GM12878 (cell line): ENCODE measurements at regions of chr1 and their contacts with region 1.

Region 1: DNA sequence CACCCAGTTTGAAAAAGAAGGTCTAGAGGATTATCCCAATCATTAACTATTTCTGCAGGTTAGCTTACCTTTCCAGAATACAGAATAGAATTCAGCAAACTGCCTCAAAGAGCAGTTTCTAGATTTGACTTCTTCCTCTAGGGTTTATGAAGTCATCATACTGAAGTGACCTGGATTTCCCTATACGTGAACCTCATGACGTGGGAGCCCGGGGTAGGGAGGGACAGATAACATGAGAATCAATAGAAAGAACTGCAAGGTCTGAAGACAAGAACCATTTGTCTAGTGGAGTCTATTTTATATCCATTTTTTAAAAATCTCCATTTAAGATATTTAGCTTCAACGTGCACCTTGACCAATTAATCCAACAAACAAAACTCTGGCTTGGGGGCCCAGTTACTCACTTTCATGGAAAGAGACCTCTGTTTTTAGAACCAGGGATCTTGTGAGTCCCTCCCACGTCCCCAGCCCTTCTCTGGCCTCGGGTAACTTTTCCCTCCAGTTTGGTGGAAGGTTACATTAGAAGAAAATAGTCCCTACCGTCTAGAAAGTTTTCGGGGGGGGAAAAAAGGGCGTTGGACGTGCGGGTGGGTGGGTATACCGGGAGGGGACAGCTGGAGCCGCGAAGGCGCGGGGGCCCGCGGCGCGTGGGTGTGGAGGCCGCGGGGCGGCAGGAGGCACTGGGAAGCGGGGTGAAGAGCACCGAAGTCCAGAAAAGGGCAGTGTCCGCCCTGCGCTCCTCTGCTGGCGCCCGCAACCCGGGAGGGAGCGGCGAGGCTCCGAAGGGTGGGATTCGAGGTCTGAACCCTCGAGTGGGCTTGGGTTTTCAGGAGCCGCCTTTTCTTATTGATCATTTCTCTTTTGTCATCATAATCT is 13.8 kb upstream of the POGZ start:
- DNase-seq: no peak
- ATAC-seq: peak; percentile 49
- H3K4me3 ChIP-seq: peak overlapping the region; percentile 65
- H3K27ac ChIP-seq: peak overlapping the region; percentile 37
- H3K4me1 ChIP-seq: peaks cover 18% of the 10 kb centered on the region
- H3K27me3 ChIP-seq: no peaks in the 10 kb centered on the region
- CTCF ChIP-seq: no peak
- EP300 ChIP-seq: no peak
- POLR2A ChIP-seq: peak; percentile 47
- RAD21 ChIP-seq: 0 out of 2 replicates have a peak, but pooled peaks have one; percentile 5

Region 2: GRCh38 chr1:151254217-151255213 is 218.6 kb before region 1 on chr1 and contains the start of gene PSMD4:
- CTCF ChIA-PET with region 1: no interaction called
- POLR2A ChIA-PET with region 1: no interaction called
- RAD21 ChIA-PET with region 1: no interaction called
- SMC1A ChIA-PET with region 1: no interaction called
- in situ Hi-C with region 1: no loop called
- intact Hi-C with region 1: no loop called
- DNase-seq: peak; percentile 96
- ATAC-seq: peak; percentile 95
- H3K4me3 ChIP-seq: peak within 1 kb of the TSS; percentile 81
- H3K27ac ChIP-seq: peak within 1 kb of the TSS; percentile 87
- H3K4me1 ChIP-seq: peaks cover 2% of the 10 kb centered on the region; the same call in 1 of the 2 replicates
- H3K27me3 ChIP-seq: no peaks in the 10 kb centered on the region
- CTCF ChIP-seq: no peak
- EP300 ChIP-seq: no peak
- POLR2A ChIP-seq: peak; percentile 94
- RAD21 ChIP-seq: no peak
- polyA plus RNA-seq, gene PSMD4: 129 to 190 TPM

Region 3: DNA sequence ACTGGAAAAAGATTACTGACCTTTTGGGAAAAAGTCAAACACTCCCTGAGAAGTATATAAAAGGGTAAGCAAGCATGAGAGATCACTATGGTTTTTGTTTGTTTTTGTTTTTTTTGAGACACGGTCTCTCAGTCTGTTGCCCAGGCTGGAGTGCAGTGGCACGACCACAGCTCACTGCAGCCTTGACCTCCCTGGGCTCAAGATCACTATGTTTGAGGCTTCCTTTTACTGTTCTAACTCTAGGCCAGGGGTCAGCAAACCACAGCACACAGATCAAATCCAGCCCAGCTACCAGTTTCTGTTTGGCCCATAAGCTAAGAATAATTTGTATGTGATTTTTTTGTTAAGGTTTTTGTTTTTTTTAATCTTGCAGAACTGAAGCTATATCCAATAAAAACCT is 48.0 kb before region 1 on chr1:
- CTCF ChIA-PET with region 1: no interaction called
- POLR2A ChIA-PET with region 1: no interaction called
- RAD21 ChIA-PET with region 1: no interaction called
- SMC1A ChIA-PET with region 1: no interaction called
- in situ Hi-C with region 1: no loop called
- intact Hi-C with region 1: no loop called
- DNase-seq: no peak
- ATAC-seq: no peak
- H3K4me3 ChIP-seq: no peak overlapping the region
- H3K27ac ChIP-seq: no peak overlapping the region
- H3K4me1 ChIP-seq: no peaks in the 10 kb centered on the region
- H3K27me3 ChIP-seq: no peaks in the 10 kb centered on the region
- CTCF ChIP-seq: no peak
- EP300 ChIP-seq: no peak
- POLR2A ChIP-seq: no peak
- RAD21 ChIP-seq: no peak

Region 4: GRCh38 chr1:151459331-151460046 is 13.6 kb before region 1 on chr1 and contains the start of gene POGZ:
- CTCF ChIA-PET with region 1: interaction called, 7 read pairs
- POLR2A ChIA-PET with region 1: interaction called, 8 read pairs
- RAD21 ChIA-PET with region 1: interaction called, 7 read pairs
- SMC1A ChIA-PET with region 1: interaction called, 13 read pairs
- in situ Hi-C with region 1: no loop called
- intact Hi-C with region 1: loop called (anchors 1 kb)
- DNase-seq: peak; percentile 72
- ATAC-seq: peak; percentile 85
- H3K4me3 ChIP-seq: peak within 1 kb of the TSS; percentile 94
- H3K27ac ChIP-seq: peak within 1 kb of the TSS; percentile 89
- H3K4me1 ChIP-seq: peaks cover 6% of the 10 kb centered on the region
- H3K27me3 ChIP-seq: no peaks in the 10 kb centered on the region
- CTCF ChIP-seq: no peak
- EP300 ChIP-seq: 0 out of 4 replicates have a peak, but pooled peaks of 1 of the 2 experiments have one; percentile 25
- POLR2A ChIP-seq: peak; percentile 83
- RAD21 ChIP-seq: no peak
- polyA plus RNA-seq, gene POGZ: 11.3 to 26.9 TPM

Region 5: GRCh38 chr1:151494741-151495281 is 21.7 kb after region 1 on chr1:
- CTCF ChIA-PET with region 1: no interaction called
- POLR2A ChIA-PET with region 1: interaction called, 5 read pairs
- RAD21 ChIA-PET with region 1: interaction called, 10 read pairs
- SMC1A ChIA-PET with region 1: interaction called, 5 read pairs
- in situ Hi-C with region 1: no loop called
- intact Hi-C with region 1: no loop called
- DNase-seq: no peak
- ATAC-seq: peak; percentile 80
- H3K4me3 ChIP-seq: no peak overlapping the region
- H3K27ac ChIP-seq: no peak overlapping the region
- H3K4me1 ChIP-seq: peaks cover 4% of the 10 kb centered on the region
- H3K27me3 ChIP-seq: no peaks in the 10 kb centered on the region
- CTCF ChIP-seq: no peak
- EP300 ChIP-seq: peak; percentile 27 to 56; a peak in 2 of 4 replicates
- POLR2A ChIP-seq: no peak
- RAD21 ChIP-seq: no peak